HEK293 (cell line): ENCODE measurements at regions of chr12 and their contacts with region 1.

Region 1: DNA sequence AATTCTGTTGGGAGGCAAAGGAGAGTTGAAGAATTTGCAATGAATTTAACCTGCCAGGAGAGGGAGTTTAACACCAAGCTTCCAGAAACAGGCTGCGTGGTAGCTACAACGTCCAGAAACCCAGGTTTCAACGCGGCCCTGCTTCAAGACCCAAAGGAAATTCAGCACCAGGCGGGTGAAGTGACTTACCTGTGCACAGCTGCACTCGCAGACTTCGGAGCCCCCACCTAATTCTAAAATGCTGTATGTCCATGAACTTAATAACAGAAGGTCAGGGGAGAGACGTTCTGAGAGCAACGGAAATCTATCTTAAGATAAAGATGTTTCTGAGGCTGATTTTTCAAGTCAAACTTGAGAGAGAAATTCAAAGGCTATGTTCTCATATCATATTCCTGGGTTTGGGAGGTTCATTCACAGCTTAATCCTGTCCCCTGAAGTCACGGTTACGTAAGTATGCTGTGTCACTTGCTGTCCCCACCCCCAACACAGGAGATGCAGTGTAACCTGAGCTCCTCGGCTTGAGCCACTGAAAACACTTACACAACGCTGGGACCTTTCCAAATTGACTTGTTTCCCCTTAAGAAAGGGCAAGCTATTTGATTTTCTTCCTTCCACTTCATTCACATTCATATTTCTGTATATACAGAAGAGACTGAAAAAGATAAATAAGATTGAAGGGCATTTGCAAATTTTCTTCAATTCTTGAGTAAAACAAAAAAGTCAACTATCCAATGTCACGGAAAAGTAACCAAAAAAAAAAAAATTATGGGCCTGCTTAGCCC is 22.7 kb downstream of the CLIP1 start:
- H3K4me3 ChIP-seq: peak overlapping the region; percentile 20; the same call in 1 of the 2 replicates
- H3K27ac ChIP-seq: peak overlapping the region; percentile 71
- H3K4me1 ChIP-seq: peaks cover 1% of the 10 kb centered on the region; the same call in 1 of the 2 replicates
- CTCF ChIP-seq: peak; percentile 39; the same call in 1 of the 2 replicates

Region 2: GRCh38 chr12:122366685-122367475 is 32.9 kb before region 1 on chr12:
- CTCF ChIA-PET with region 1: interaction called, 8 read pairs
- POLR2A ChIA-PET with region 1: interaction called, 19 read pairs
- H3K4me3 ChIP-seq: no peak overlapping the region
- H3K27ac ChIP-seq: 0 out of 2 replicates have a peak overlapping the region, but pooled peaks have one; percentile 62
- H3K4me1 ChIP-seq: peaks cover 17% of the 10 kb centered on the region
- CTCF ChIP-seq: no peak

Region 3: DNA sequence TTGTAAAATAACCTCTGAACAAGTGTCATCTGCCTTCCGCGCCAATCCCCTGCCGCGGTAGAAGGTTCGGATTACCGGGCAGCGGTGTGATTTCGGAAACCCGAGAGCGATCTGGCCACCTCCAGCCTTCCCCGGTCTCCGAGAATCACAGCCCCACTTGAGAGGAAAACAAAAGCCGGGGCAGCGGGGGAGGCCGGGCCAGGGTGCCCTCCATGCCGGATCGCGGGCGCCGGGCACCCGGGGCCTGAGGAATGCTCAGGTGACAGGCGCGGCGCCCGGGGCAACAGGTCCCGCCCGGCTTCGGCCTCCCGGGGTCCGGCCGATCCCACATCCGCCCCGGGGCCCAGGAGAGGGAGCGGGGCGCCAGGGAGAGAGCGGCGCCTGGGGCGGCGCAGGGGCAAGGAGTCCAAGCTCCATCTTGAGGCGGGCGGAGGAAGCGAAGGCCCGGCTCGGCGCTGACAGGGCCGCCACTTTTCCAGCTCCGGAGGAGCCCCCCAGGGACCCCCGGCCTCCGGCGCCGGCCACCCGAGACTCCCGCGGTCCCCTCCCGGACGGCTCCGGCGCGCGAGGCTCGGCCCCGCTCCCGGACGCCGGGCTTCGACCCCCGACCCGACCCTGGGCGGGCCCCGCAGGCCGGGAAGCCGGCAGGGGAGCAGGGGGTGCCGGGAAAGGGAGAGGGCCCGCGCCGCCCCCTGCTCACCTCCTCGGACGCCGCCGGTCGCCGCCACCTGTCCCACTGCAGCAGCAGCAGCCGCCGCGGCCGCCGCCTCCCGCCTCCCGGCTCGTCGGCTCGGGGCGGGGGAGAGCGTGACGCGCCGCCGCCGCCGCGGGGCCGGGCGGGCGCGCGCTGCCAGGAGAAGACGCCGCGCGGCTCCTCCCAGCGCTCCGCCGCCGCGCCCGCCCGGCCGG is 22.3 kb after region 1 on chr12 and contains the start of gene CLIP1:
- CTCF ChIA-PET with region 1: interaction called, 7 read pairs
- POLR2A ChIA-PET with region 1: interaction called, 16 read pairs
- H3K4me3 ChIP-seq: peak within 1 kb of the TSS; percentile 56
- H3K27ac ChIP-seq: peak within 1 kb of the TSS; percentile 99
- H3K4me1 ChIP-seq: peaks cover 18% of the 10 kb centered on the region
- CTCF ChIP-seq: peak; percentile 71

Region 4: GRCh38 chr12:122471324-122472226 is 71.8 kb after region 1 on chr12:
- CTCF ChIA-PET with region 1: interaction called, 156 read pairs
- POLR2A ChIA-PET with region 1: interaction called, 12 read pairs
- H3K4me3 ChIP-seq: no peak overlapping the region
- H3K27ac ChIP-seq: no peak overlapping the region; the same call in 1 of the 2 replicates
- H3K4me1 ChIP-seq: 0 out of 2 replicates have a peak, but pooled peaks cover 3% of the 10 kb centered on the region
- CTCF ChIP-seq: no peak